ENCODE measurements at regions of chr19 and their contacts with region 1.

Region 1: DNA sequence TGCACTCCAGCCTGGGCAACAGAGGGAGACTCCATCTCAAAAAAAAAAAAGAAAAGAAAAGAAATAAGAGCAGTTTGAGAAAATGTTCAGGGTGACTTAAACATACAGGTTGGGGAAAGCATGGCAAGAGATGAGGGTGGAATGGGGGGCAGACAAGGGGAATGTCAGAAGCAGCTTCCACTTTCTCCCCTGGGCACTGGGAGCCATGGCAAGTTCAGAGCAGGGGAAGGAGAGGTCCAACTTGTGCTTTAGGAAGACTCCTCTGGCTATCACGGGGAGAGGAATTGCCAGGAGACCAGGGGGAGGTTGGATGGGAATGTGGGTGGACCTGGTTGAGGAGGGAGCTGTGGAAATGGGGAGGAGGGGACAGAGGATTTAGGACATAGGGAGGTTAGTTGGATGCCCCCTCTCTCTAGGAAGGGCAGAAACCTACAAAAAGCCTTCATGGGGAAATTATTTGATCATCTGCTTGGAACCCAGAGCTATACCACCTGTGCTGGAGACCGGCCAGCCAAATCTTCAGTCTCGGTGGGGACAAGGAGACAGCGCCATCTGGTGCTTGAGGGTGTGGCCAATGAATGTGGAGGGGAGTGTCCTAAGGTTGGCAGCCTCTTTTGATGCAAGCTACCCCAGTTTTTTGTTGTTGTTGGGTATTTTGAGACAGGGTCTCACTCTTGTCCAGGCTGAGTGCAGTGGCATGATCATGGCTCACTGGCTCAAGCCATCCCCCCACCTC is 7.3 kb upstream of the STRN4 start:
- DNase-seq: no peak
- ATAC-seq: no peak
- H3K4me3 ChIP-seq: no peak overlapping the region
- H3K27ac ChIP-seq: no peak overlapping the region
- H3K4me1 ChIP-seq: no peaks in the 10 kb centered on the region
- H3K27me3 ChIP-seq: no peaks in the 10 kb centered on the region
- CTCF ChIP-seq: peak; percentile 50

Region 2: GRCh38 chr19:46821498-46822409 is 68.2 kb after region 1 on chr19:
- CTCF ChIA-PET with region 1: no interaction called
- POLR2A ChIA-PET with region 1: no interaction called
- in situ Hi-C with region 1: no loop called
- intact Hi-C with region 1: no loop called
- DNase-seq: no peak
- ATAC-seq: no peak
- H3K4me3 ChIP-seq: no peak overlapping the region
- H3K27ac ChIP-seq: no peak overlapping the region
- H3K4me1 ChIP-seq: no peaks in the 10 kb centered on the region
- H3K27me3 ChIP-seq: no peaks in the 10 kb centered on the region
- CTCF ChIP-seq: no peak

Region 3: GRCh38 chr19:46840136-46840942 is 86.8 kb after region 1 on chr19:
- CTCF ChIA-PET with region 1: interaction called, 19 read pairs
- POLR2A ChIA-PET with region 1: no interaction called
- in situ Hi-C with region 1: no loop called
- intact Hi-C with region 1: no loop called
- DNase-seq: no peak
- ATAC-seq: peak; percentile 54
- H3K4me3 ChIP-seq: no peak overlapping the region
- H3K27ac ChIP-seq: no peak overlapping the region
- H3K4me1 ChIP-seq: no peaks in the 10 kb centered on the region; the same call in 1 of the 2 replicates
- H3K27me3 ChIP-seq: no peaks in the 10 kb centered on the region
- CTCF ChIP-seq: peak; percentile 90

Measured in Panc1 (cell line).